Tibial artery (tissue), 4 donors: ENCODE measurements at regions of chr5 and their contacts with region 1.

Region 1: GRCh38 chr5:52948418-52949076 is 40.6 kb upstream of the ITGA2 start:
- DNase-seq: peak; percentile 67 to 74
- H3K4me3 ChIP-seq: no peak overlapping the region
- H3K27ac ChIP-seq: peak overlapping the region; percentile 23
- H3K4me1 ChIP-seq: peaks cover 0 to 42% (median 0%) of the 10 kb centered on the region in 4 donors
- H3K27me3 ChIP-seq: no peaks in the 10 kb centered on the region
- CTCF ChIP-seq: peak; percentile 71 to 78

Region 2: GRCh38 chr5:53095931-53096525 is 147.5 kb after region 1 on chr5:
- intact Hi-C with region 1: loop called (anchors 5 kb)
- DNase-seq: peak; percentile 65 to 72
- H3K4me3 ChIP-seq: no peak overlapping the region
- H3K27ac ChIP-seq: no peak overlapping the region
- H3K4me1 ChIP-seq: peaks cover 0 to 26% (median 10%) of the 10 kb centered on the region in 4 donors
- H3K27me3 ChIP-seq: no peaks in the 10 kb centered on the region
- CTCF ChIP-seq: peak; percentile 82 to 85